HepG2 (cell line): ENCODE measurements at regions of chr12 and their contacts with region 1.

Region 1: DNA sequence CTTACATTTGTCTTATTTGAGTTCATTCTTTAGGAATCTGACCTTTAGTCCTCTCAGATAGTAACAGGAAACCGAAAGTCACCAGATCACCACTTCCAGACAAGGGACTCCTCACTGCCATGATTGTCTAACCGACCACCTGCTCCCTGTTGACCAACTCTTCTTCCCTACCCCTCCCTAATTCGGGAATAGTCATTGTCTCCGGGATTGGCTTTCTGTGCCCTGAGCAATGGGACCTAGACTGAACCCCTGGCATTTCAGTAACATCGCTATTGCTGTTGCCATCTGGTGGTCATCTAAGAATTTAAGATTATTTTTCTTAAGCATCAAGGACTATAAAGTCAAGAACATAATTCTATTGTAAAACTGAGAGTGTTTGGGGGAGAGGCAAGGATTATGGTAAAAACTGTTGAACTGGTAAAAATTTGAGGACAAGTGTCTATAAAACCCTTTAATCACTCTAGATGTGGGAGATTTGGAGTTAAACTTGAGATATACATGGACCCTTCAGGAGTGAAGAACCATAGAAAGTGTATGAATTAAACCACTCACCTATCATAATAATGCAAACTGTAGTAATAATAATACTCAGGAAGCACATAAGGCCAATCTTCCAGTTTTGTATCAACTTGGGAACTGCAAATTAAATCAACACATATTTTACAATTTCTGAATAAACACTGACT is 6.3 kb downstream of the CLEC2A start:
- DNase-seq: peak; percentile 9
- ATAC-seq: peak; percentile 64
- H3K4me3 ChIP-seq: peak overlapping the region in 1 of 3 experiments; percentile 29; a peak in 1 of 6 replicates
- H3K27ac ChIP-seq: no peak overlapping the region
- H3K4me1 ChIP-seq: no peaks in the 10 kb centered on the region
- H3K27me3 ChIP-seq: no peaks in the 10 kb centered on the region
- CTCF ChIP-seq: peak; percentile 56
- EP300 ChIP-seq: no peak
- POLR2A ChIP-seq: no peak
- RAD21 ChIP-seq: no peak

Region 2: DNA sequence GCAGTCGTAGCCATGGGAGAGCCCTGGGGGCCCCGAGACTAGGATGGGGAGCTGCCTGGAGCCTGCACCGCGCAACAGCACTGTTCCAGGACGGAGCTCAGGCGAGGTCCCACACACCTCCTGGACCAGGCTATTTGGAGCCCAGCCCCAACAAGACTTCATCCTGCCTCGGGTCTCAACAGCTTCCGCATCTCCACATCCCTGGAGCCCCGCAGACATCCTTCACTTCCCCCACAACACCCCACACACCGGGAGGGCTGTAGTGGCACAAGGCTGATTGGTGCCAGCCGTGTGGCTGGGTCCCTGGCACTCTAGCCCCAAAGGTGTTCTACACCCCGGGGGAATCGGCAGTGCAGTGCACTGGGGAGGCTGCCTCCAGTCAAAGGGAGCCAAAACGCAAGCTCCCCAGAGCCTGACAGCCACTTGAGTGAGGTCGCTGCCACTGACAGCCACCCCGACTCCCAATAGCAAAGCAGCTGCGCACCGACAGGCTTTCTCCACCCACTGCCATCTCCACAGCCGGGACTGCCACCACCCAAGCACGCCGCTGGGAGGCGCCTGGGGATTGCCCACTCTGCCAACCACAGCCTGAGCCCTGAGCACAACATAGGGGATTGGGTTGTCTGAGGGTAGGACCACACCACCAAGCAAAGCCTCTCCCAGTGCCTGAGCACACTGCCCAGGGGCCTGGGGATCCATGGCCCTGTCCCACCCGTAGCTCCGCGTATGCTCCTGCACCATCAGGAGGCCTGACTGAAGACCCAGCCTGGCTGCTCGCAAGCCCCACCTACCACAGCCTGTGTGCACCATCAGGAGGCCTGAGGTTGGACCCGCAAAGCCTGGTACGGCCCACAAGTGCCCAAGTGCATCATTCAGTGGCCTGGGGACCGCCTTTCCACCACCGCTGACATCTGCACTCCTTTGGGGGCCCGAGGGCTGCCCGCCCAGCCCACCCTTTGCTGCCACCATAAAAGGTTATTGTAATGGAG is 111.7 kb before region 1 on chr12:
- CTCF ChIA-PET with region 1: interaction called, 11 read pairs
- POLR2A ChIA-PET with region 1: no interaction called
- in situ Hi-C with region 1: no loop called
- intact Hi-C with region 1: no loop called
- DNase-seq: peak; percentile 9
- ATAC-seq: peak; percentile 100
- H3K4me3 ChIP-seq: no peak overlapping the region; a peak in 1 of 6 replicates
- H3K27ac ChIP-seq: no peak overlapping the region
- H3K4me1 ChIP-seq: no peaks in the 10 kb centered on the region
- H3K27me3 ChIP-seq: peaks cover 2 to 37% of the 10 kb centered on the region in 2 experiments; a peak in 3 of 5 replicates
- CTCF ChIP-seq: peak; percentile 90
- EP300 ChIP-seq: no peak
- POLR2A ChIP-seq: no peak
- RAD21 ChIP-seq: peak; percentile 79